HepG2 (cell line): ENCODE measurements at regions of chr10 and their contacts with region 1.

Region 1: DNA sequence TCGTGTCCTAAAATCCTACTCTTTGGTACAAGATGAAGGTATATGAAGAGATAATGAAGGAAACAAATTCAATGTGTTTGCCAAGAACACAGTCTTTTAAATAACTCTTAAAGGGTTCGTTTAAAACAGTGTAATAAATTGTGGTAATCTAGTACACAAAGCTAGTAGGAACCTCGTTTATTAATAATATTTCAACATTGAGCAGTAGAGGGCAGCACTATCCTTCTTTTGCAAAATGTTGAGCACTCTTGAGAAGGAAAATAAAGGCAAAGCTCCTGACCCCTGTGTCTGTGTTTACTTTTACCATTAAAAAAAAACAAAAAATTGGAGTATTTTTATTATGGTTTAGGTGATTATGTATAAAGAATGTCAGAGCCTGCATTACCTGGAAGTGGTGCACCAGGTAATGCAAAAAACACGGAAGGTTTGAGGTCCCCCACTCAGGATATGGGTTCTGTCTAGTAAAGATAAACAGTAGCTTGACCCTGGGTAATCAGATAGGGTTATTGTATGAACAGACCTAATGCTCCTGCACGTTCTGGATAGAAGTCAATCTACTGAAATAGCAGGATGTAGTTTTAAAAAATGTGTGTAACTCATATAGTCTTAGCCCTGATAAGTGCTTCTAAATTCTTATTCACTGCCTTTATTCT is 5.7 kb upstream of the GOT1 start:
- DNase-seq: peak; percentile 48
- ATAC-seq: peak; percentile 73
- H3K4me3 ChIP-seq: no peak overlapping the region
- H3K27ac ChIP-seq: no peak overlapping the region
- H3K4me1 ChIP-seq: peaks cover 30% of the 10 kb centered on the region
- H3K27me3 ChIP-seq: no peaks in the 10 kb centered on the region; a peak in 1 of 5 replicates
- CTCF ChIP-seq: peak; percentile 69
- EP300 ChIP-seq: no peak
- POLR2A ChIP-seq: no peak
- RAD21 ChIP-seq: 0 out of 2 replicates have a peak, but pooled peaks have one; percentile 40

Region 2: DNA sequence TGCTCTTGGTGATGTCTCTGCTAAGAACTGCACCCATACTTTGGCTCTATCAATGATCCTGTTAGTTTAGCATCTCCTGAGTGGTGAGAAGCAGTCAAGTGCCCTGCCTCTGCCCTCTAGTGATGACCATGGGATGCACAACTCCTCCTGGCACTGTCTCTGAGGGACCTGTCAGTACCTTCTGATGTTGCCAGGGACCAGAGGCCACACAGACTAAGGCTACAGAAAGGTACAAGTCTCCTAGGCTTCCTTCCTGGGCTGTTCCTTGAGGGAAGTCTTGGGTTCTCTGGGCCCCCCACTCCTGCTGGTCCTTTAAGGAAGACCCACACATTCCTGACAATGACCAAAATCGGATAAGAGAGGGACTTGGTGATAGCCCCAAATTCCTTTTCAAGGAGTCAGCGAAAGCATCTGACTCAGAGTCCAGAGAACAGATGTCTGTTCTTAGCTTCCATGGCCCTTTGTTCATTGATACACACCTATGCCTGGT is 112.0 kb after region 1 on chr10:
- CTCF ChIA-PET with region 1: interaction called, 11 read pairs
- POLR2A ChIA-PET with region 1: no interaction called
- in situ Hi-C with region 1: loop called (anchors 5 kb)
- intact Hi-C with region 1: loop called (anchors 1 kb)
- DNase-seq: peak; percentile 32
- ATAC-seq: peak; percentile 96
- H3K4me3 ChIP-seq: no peak overlapping the region
- H3K27ac ChIP-seq: no peak overlapping the region
- H3K4me1 ChIP-seq: no peaks in the 10 kb centered on the region
- H3K27me3 ChIP-seq: peaks cover 2 to 6% of the 10 kb centered on the region in 2 experiments; a peak in 3 of 5 replicates
- CTCF ChIP-seq: peak; percentile 69
- EP300 ChIP-seq: no peak
- POLR2A ChIP-seq: no peak
- RAD21 ChIP-seq: no peak

Region 3: GRCh38 chr10:99612167-99612831 is 176.2 kb after region 1 on chr10:
- CTCF ChIA-PET with region 1: interaction called, 13 read pairs
- POLR2A ChIA-PET with region 1: no interaction called
- in situ Hi-C with region 1: loop called (anchors 5 kb)
- intact Hi-C with region 1: loop called (anchors 1 kb)
- DNase-seq: peak; percentile 63
- ATAC-seq: peak; percentile 70
- H3K4me3 ChIP-seq: no peak overlapping the region
- H3K27ac ChIP-seq: no peak overlapping the region
- H3K4me1 ChIP-seq: peaks cover 8% of the 10 kb centered on the region
- H3K27me3 ChIP-seq: no peaks in the 10 kb centered on the region
- CTCF ChIP-seq: peak; percentile 84
- EP300 ChIP-seq: no peak
- POLR2A ChIP-seq: no peak
- RAD21 ChIP-seq: peak; percentile 82

Region 4: GRCh38 chr10:99711129-99711719 is 275.1 kb after region 1 on chr10:
- CTCF ChIA-PET with region 1: interaction called, 7 read pairs
- POLR2A ChIA-PET with region 1: no interaction called
- in situ Hi-C with region 1: no loop called
- intact Hi-C with region 1: loop called (anchors 5 kb)
- DNase-seq: peak; percentile 51
- ATAC-seq: peak; percentile 92
- H3K4me3 ChIP-seq: no peak overlapping the region
- H3K27ac ChIP-seq: no peak overlapping the region
- H3K4me1 ChIP-seq: no peaks in the 10 kb centered on the region
- H3K27me3 ChIP-seq: no peaks in the 10 kb centered on the region
- CTCF ChIP-seq: peak; percentile 78
- EP300 ChIP-seq: no peak
- POLR2A ChIP-seq: no peak
- RAD21 ChIP-seq: no peak